ENCODE measurements at regions of chr1 and their contacts with region 1.

Region 1: DNA sequence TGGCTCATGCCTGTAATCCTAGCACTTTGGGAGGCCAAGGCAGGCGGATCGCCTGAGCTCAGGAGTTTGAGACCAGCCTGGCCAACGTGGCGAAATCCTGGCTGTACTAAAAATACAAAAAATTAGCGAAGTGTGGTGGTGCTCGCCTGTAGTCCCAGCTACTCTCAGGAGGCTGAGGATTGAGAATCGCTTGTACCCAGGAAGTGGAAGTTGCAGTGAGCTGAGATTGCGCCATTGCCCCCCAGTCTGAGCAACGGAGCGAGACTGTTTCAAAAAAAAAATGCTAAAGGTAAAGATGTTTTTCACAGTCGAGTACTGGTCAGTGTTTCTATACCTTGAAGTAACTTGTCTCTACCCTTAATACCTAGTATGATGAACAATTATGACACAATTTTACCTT is 11.1 kb downstream of the GLRX2 start:
- H3K4me3 Mint-ChIP-seq: no peak overlapping the region
- H3K27ac Mint-ChIP-seq: no peak overlapping the region
- H3K4me1 Mint-ChIP-seq: no peaks in the 10 kb centered on the region
- H3K27me3 Mint-ChIP-seq: no peaks in the 10 kb centered on the region

Region 2: GRCh38 chr1:192489748-192490147 is 604.4 kb before region 1 on chr1:
- intact Hi-C with region 1: no loop called
- H3K4me3 Mint-ChIP-seq: no peak overlapping the region
- H3K27ac Mint-ChIP-seq: peak overlapping the region; percentile 52
- H3K4me1 Mint-ChIP-seq: no peaks in the 10 kb centered on the region
- H3K27me3 Mint-ChIP-seq: no peaks in the 10 kb centered on the region

Region 3: GRCh38 chr1:192983349-192983980 is 110.6 kb before region 1 on chr1:
- intact Hi-C with region 1: no loop called
- H3K4me3 Mint-ChIP-seq: no peak overlapping the region
- H3K27ac Mint-ChIP-seq: no peak overlapping the region
- H3K4me1 Mint-ChIP-seq: no peaks in the 10 kb centered on the region
- H3K27me3 Mint-ChIP-seq: no peaks in the 10 kb centered on the region

Region 4: GRCh38 chr1:193131266-193131860 is 37.3 kb after region 1 on chr1:
- intact Hi-C with region 1: loop called (anchors 5 kb)
- H3K4me3 Mint-ChIP-seq: no peak overlapping the region
- H3K27ac Mint-ChIP-seq: no peak overlapping the region
- H3K4me1 Mint-ChIP-seq: peaks cover 16% of the 10 kb centered on the region
- H3K27me3 Mint-ChIP-seq: no peaks in the 10 kb centered on the region